Activated CD4-positive, alpha-beta memory T cell treated with anti-CD3 and anti-CD28 coated beads for 36 hours (primary cell): ENCODE measurements at regions of chr3 and their contacts with region 1.

Region 1: DNA sequence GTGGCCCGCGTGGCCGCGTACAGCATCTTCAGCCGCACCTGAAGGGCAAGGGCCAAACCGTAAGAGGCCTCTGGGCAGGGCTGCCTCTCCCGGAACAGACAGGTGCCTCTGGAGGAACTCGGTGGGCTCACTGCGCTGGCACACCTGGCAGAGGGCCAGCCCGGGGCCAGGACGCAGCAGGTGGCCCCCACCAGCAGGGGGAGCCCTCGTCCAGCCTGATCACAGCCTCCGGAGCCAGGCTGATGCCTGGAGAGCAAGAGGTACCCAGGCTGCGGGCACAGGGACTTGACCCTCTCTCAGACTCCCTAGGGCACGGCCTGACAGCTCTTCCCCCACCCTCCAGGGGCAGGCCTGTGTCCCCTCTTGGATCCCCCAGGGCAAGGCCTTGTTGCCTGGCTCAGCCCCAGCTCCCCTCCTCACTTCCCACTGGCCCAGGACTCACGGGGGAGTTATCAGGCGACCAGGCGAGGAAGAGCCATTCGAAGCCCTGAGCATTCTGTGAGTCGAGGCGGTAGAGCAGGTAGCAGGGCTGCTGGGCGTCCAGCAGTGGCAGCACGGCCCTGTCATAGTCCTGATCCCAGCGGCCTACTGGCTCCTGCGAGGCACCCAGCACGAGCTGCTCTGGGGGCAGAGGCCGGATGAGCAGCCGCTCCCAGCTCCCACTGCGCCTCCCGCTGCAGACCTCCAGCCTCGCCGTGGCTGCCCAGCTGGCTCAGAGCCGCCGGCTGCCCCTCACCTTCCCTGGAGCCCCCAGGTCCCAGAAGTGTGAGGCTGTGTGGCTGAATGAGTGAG is 6.3 kb upstream of the TLR9 start:
- DNase-seq: peak; percentile 90
- H3K4me3 Mint-ChIP-seq: no peak overlapping the region
- H3K27ac Mint-ChIP-seq: peak overlapping the region; percentile 73
- H3K4me1 Mint-ChIP-seq: peaks cover 37% of the 10 kb centered on the region
- H3K27me3 Mint-ChIP-seq: no peaks in the 10 kb centered on the region

Region 2: GRCh38 chr3:51559411-51559888 is 672.2 kb before region 1 on chr3:
- CTCF ChIA-PET with region 1: no interaction called
- POLR2A ChIA-PET with region 1: no interaction called
- intact Hi-C with region 1: no loop called
- DNase-seq: no peak
- H3K4me3 Mint-ChIP-seq: no peak overlapping the region
- H3K27ac Mint-ChIP-seq: no peak overlapping the region
- H3K4me1 Mint-ChIP-seq: peaks cover 9% of the 10 kb centered on the region
- H3K27me3 Mint-ChIP-seq: no peaks in the 10 kb centered on the region

Region 3: GRCh38 chr3:52245322-52246263 is 13.9 kb after region 1 on chr3 and contains the start of gene PPM1M:
- CTCF ChIA-PET with region 1: interaction called, 23 read pairs
- POLR2A ChIA-PET with region 1: interaction called, 5 read pairs
- intact Hi-C with region 1: no loop called
- DNase-seq: peak; percentile 64
- H3K4me3 Mint-ChIP-seq: peak within 1 kb of the TSS; percentile 95
- H3K27ac Mint-ChIP-seq: peak within 1 kb of the TSS; percentile 94
- H3K4me1 Mint-ChIP-seq: peaks cover 80% of the 10 kb centered on the region
- H3K27me3 Mint-ChIP-seq: no peaks in the 10 kb centered on the region
- total RNA-seq, gene PPM1M: 111 TPM

Region 4: GRCh38 chr3:52259035-52259434 is 27.3 kb after region 1 on chr3:
- CTCF ChIA-PET with region 1: interaction called, 21 read pairs
- POLR2A ChIA-PET with region 1: no interaction called
- intact Hi-C with region 1: no loop called
- DNase-seq: no peak
- H3K4me3 Mint-ChIP-seq: no peak overlapping the region
- H3K27ac Mint-ChIP-seq: peak overlapping the region; percentile 97
- H3K4me1 Mint-ChIP-seq: peaks cover 90% of the 10 kb centered on the region
- H3K27me3 Mint-ChIP-seq: no peaks in the 10 kb centered on the region

Region 5: GRCh38 chr3:52291508-52292181 is 59.9 kb after region 1 on chr3:
- CTCF ChIA-PET with region 1: interaction called, 23 read pairs
- POLR2A ChIA-PET with region 1: no interaction called
- intact Hi-C with region 1: no loop called
- DNase-seq: peak; percentile 57
- H3K4me3 Mint-ChIP-seq: no peak overlapping the region
- H3K27ac Mint-ChIP-seq: no peak overlapping the region
- H3K4me1 Mint-ChIP-seq: peaks cover 17% of the 10 kb centered on the region
- H3K27me3 Mint-ChIP-seq: no peaks in the 10 kb centered on the region

Region 6: DNA sequence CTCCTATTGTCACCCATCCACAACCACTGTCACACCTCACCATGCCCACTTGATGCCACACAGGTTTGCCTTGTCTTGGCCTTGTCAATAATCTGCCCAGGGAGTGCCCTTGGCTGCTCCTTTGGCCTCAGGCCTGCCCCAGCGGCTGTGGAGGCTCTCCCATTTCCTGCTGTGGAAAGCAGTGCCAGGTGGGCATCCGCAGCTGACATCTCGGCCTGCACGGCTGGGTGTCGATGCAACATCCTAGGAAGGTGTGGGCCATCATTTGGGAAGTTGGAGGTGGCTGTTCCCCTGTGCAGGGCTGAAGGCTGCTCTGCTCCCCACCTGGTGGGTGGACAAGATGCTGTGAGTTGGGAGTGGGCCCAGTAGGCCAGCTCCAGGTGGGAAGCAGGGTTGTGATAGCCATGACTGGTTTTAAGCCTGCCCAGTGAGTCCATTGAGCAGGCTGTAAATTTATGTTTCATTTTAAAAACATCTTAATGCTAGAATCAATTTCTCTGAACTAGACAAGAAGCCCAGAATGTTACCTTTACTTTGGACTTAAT is 96.9 kb after region 1 on chr3:
- CTCF ChIA-PET with region 1: interaction called, 11 read pairs
- POLR2A ChIA-PET with region 1: no interaction called
- intact Hi-C with region 1: no loop called
- DNase-seq: no peak
- H3K4me3 Mint-ChIP-seq: no peak overlapping the region
- H3K27ac Mint-ChIP-seq: no peak overlapping the region
- H3K4me1 Mint-ChIP-seq: no peaks in the 10 kb centered on the region
- H3K27me3 Mint-ChIP-seq: no peaks in the 10 kb centered on the region